ENCODE measurements at regions of chr5 and their contacts with region 1.

Region 1: DNA sequence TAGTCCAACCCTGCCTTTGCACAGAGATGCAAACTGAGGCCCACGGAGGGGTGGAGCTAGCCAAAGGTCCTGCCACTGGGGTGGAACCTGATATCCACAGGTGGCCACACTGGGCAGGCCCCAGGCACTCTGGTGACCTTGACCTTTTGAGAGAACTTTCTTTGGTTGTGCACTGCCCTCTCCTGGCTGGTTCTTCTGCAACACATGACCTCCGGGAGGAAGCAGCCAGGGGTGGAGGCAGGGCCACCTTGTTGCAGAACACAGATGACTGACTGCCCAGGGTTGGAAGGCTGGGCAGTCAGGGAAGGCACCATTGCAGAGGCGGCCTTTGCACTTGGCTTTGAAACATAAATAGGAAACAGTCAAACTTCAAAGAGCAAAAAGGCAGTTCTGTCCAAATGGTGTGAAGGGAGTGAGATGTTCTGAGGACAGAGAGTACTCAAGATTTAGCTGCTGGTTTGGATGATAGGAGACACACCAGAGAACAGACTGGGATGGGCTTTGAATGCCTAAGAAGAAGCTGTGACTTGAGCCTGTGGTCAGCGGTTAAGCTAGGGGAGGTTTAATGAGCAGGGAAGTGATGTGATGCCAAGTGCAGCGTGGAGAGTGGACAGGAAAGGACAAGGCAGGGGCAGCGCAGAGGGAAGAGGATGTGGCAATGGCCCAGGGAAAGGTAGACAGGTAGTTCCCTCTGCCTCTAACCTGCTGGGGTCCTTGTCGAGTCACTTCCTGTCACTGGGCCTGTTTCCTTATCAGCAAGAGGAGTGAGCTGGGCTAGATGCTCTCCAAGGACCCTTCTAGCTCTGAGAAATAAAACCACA is 6.8 kb upstream of the TCOF1 start:
- DNase-seq: peak in 12 of 14 experiments; percentile 10 to 70 (median 32)
- ATAC-seq: peak; percentile 78
- H3K4me3 ChIP-seq: no peak overlapping the region
- H3K4me3 Mint-ChIP-seq: no peak overlapping the region
- H3K27ac ChIP-seq: peak overlapping the region in 1 of 2 donors; percentile 40
- H3K27ac Mint-ChIP-seq: peak overlapping the region; percentile 61
- H3K4me1 ChIP-seq: peaks cover 13% of the 10 kb centered on the region
- H3K4me1 Mint-ChIP-seq: peaks cover 14% of the 10 kb centered on the region
- H3K27me3 ChIP-seq: no peaks in the 10 kb centered on the region
- H3K27me3 Mint-ChIP-seq: no peaks in the 10 kb centered on the region
- CTCF ChIP-seq: peak; percentile 56

Region 2: GRCh38 chr5:150161242-150162141 is 189.2 kb before region 1 on chr5:
- CTCF ChIA-PET with region 1: no interaction called
- POLR2A ChIA-PET with region 1: no interaction called
- intact Hi-C with region 1: loop called (anchors 5 kb)
- DNase-seq: peak; percentile 48 to 79 (median 66)
- ATAC-seq: peak; percentile 77
- H3K4me3 ChIP-seq: no peak overlapping the region
- H3K4me3 Mint-ChIP-seq: no peak overlapping the region
- H3K27ac ChIP-seq: no peak overlapping the region
- H3K27ac Mint-ChIP-seq: no peak overlapping the region
- H3K4me1 ChIP-seq: no peaks in the 10 kb centered on the region
- H3K4me1 Mint-ChIP-seq: no peaks in the 10 kb centered on the region
- H3K27me3 ChIP-seq: peaks cover 10 to 18% of the 10 kb centered on the region in 2 experiments
- H3K27me3 Mint-ChIP-seq: peaks cover 37% of the 10 kb centered on the region
- CTCF ChIP-seq: peak; percentile 87

Region 3: GRCh38 chr5:150363185-150363584 is 12.5 kb after region 1 on chr5:
- CTCF ChIA-PET with region 1: no interaction called
- POLR2A ChIA-PET with region 1: no interaction called
- intact Hi-C with region 1: loop called in 1 of 2 experiments (anchors 1 kb)
- DNase-seq: no peak
- ATAC-seq: no peak
- H3K4me3 ChIP-seq: no peak overlapping the region
- H3K4me3 Mint-ChIP-seq: no peak overlapping the region
- H3K27ac ChIP-seq: no peak overlapping the region
- H3K27ac Mint-ChIP-seq: no peak overlapping the region
- H3K4me1 ChIP-seq: peaks cover 17% of the 10 kb centered on the region
- H3K4me1 Mint-ChIP-seq: peaks cover 47% of the 10 kb centered on the region
- H3K27me3 ChIP-seq: no peaks in the 10 kb centered on the region
- H3K27me3 Mint-ChIP-seq: no peaks in the 10 kb centered on the region
- CTCF ChIP-seq: no peak